Activated CD4-positive, alpha-beta memory T cell treated with anti-CD3 and anti-CD28 coated beads, Interleukin-2, amount 10 ng/mL, durations not matched to agents 7 days and 5 days (primary cell): ENCODE measurements at regions of chr11 and their contacts with region 1.

Region 1: GRCh38 chr11:74255741-74256369 is 55.6 kb downstream of the P4HA3 start:
- DNase-seq: peak; percentile 58
- H3K4me3 Mint-ChIP-seq: no peak overlapping the region
- H3K27ac Mint-ChIP-seq: no peak overlapping the region
- H3K4me1 Mint-ChIP-seq: no peaks in the 10 kb centered on the region
- H3K27me3 Mint-ChIP-seq: no peaks in the 10 kb centered on the region

Region 2: DNA sequence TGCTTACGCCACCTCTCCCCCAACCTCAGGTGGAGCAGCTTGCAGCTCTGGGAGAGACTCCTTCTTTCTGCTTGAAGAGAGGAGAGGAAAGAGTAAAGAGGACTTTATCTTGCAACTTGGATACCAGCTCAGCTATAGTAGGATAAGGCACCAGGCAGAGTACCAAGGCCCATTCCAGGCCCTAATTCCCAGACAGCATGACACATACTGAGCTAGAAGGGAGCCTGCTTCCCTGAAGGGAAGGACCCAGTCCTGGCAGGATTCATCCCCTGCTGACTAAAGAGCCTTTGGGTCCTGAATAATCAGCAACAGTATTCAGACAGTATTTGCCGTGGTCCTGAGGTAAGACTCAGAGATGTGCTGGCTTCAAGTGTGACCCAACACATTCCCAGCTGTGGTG is 43.3 kb before region 1 on chr11:
- CTCF ChIA-PET with region 1: no interaction called
- POLR2A ChIA-PET with region 1: no interaction called
- DNase-seq: no peak
- H3K4me3 Mint-ChIP-seq: no peak overlapping the region
- H3K27ac Mint-ChIP-seq: no peak overlapping the region
- H3K4me1 Mint-ChIP-seq: no peaks in the 10 kb centered on the region
- H3K27me3 Mint-ChIP-seq: no peaks in the 10 kb centered on the region

Region 3: GRCh38 chr11:74269161-74269811 is 13.4 kb after region 1 on chr11:
- CTCF ChIA-PET with region 1: interaction called, 15 read pairs
- POLR2A ChIA-PET with region 1: no interaction called
- DNase-seq: no peak
- H3K4me3 Mint-ChIP-seq: no peak overlapping the region
- H3K27ac Mint-ChIP-seq: no peak overlapping the region
- H3K4me1 Mint-ChIP-seq: peaks cover 12% of the 10 kb centered on the region
- H3K27me3 Mint-ChIP-seq: peaks cover 14% of the 10 kb centered on the region

Region 4: GRCh38 chr11:74321487-74322188 is 65.8 kb after region 1 on chr11:
- CTCF ChIA-PET with region 1: interaction called, 29 read pairs
- POLR2A ChIA-PET with region 1: no interaction called
- DNase-seq: peak; percentile 31
- H3K4me3 Mint-ChIP-seq: no peak overlapping the region
- H3K27ac Mint-ChIP-seq: no peak overlapping the region
- H3K4me1 Mint-ChIP-seq: no peaks in the 10 kb centered on the region
- H3K27me3 Mint-ChIP-seq: peaks cover 25% of the 10 kb centered on the region